OCI-LY7 (cell line): ENCODE measurements at regions of chr3 and their contacts with region 1.

Region 1: GRCh38 chr3:39107388-39108199 is at the starts of genes GORASP1 and TTC21A:
- DNase-seq: peak; percentile 76
- H3K4me3 ChIP-seq: peak within 1 kb of the TSS; percentile 85
- H3K27ac ChIP-seq: peak within 1 kb of the TSS; percentile 97
- H3K4me1 ChIP-seq: peaks cover 61% of the 10 kb centered on the region
- CTCF ChIP-seq: 0 out of 2 replicates have a peak, but pooled peaks have one; percentile 13
- total RNA-seq, gene GORASP1: 44.8 and 59.9 TPM in 2 replicates
- total RNA-seq, gene TTC21A: 10.5 and 12.8 TPM in 2 replicates

Region 2: DNA sequence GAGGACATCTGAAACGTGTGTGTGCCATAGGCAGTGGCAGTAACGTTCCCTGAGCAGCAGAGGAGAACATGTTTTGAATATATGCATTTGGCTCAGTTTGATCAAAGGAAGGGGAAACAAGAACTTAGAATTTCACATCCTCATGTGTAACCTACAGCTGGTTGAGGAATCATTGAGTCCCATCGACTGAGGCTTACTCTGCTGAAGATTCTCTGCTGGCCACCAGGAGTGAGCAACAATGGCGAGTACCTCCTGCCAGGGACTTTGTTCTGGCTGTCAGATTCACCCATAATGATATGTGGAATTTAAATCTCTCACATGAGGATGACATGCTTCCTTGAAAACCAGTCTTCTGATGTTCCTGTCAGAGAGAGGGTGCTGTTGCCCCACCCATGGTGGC is 21.4 kb before region 1 on chr3:
- CTCF ChIA-PET with region 1: no interaction called
- POLR2A ChIA-PET with region 1: interaction called, 7 read pairs
- intact Hi-C with region 1: loop called (anchors 2 kb)
- DNase-seq: peak; percentile 91
- H3K4me3 ChIP-seq: peak overlapping the region; percentile 30
- H3K27ac ChIP-seq: peak overlapping the region; percentile 84
- H3K4me1 ChIP-seq: peaks cover 29% of the 10 kb centered on the region
- CTCF ChIP-seq: peak; percentile 64

Region 3: GRCh38 chr3:39126532-39127071 is 19.0 kb after region 1 on chr3:
- CTCF ChIA-PET with region 1: interaction called, 6 read pairs
- POLR2A ChIA-PET with region 1: interaction called, 11 read pairs
- intact Hi-C with region 1: loop called (anchors 1 kb)
- DNase-seq: peak; percentile 48
- H3K4me3 ChIP-seq: no peak overlapping the region
- H3K27ac ChIP-seq: no peak overlapping the region
- H3K4me1 ChIP-seq: peaks cover 65% of the 10 kb centered on the region
- CTCF ChIP-seq: peak; percentile 79

Region 4: GRCh38 chr3:39146984-39147591 is 39.5 kb after region 1 on chr3:
- CTCF ChIA-PET with region 1: interaction called, 3 read pairs
- POLR2A ChIA-PET with region 1: interaction called, 5 read pairs
- intact Hi-C with region 1: loop called (anchors 1 kb)
- DNase-seq: peak; percentile 59
- H3K4me3 ChIP-seq: peak overlapping the region; percentile 79
- H3K27ac ChIP-seq: peak overlapping the region; percentile 90
- H3K4me1 ChIP-seq: peaks cover 72% of the 10 kb centered on the region
- CTCF ChIP-seq: no peak